Activated CD4-positive, alpha-beta T cell treated with anti-CD3 and anti-CD28 coated beads, Interleukin-2, amount 10 ng/mL, durations not matched to agents 24 days and 14 days (primary cell): ENCODE measurements at regions of chr16 and their contacts with region 1.

Region 1: GRCh38 chr16:50806099-50807062 is 64.5 kb downstream of the CYLD start:
- DNase-seq: peak; percentile 95
- H3K4me3 Mint-ChIP-seq: peak overlapping the region; percentile 75
- H3K27ac Mint-ChIP-seq: peak overlapping the region; percentile 69
- H3K4me1 Mint-ChIP-seq: peaks cover 17% of the 10 kb centered on the region
- H3K27me3 Mint-ChIP-seq: peaks cover 5% of the 10 kb centered on the region

Region 2: GRCh38 chr16:50210266-50211038 is 595.9 kb before region 1 on chr16:
- intact Hi-C with region 1: loop called (anchors 1 kb)
- DNase-seq: peak; percentile 90
- H3K4me3 Mint-ChIP-seq: no peak overlapping the region
- H3K27ac Mint-ChIP-seq: peak overlapping the region; percentile 51
- H3K4me1 Mint-ChIP-seq: peaks cover 23% of the 10 kb centered on the region
- H3K27me3 Mint-ChIP-seq: no peaks in the 10 kb centered on the region

Region 3: GRCh38 chr16:50326949-50327402 is 479.4 kb before region 1 on chr16:
- intact Hi-C with region 1: loop called (anchors 1 kb)
- DNase-seq: peak; percentile 92
- H3K4me3 Mint-ChIP-seq: peak overlapping the region; percentile 13
- H3K27ac Mint-ChIP-seq: peak overlapping the region; percentile 61
- H3K4me1 Mint-ChIP-seq: peaks cover 40% of the 10 kb centered on the region
- H3K27me3 Mint-ChIP-seq: no peaks in the 10 kb centered on the region

Region 4: DNA sequence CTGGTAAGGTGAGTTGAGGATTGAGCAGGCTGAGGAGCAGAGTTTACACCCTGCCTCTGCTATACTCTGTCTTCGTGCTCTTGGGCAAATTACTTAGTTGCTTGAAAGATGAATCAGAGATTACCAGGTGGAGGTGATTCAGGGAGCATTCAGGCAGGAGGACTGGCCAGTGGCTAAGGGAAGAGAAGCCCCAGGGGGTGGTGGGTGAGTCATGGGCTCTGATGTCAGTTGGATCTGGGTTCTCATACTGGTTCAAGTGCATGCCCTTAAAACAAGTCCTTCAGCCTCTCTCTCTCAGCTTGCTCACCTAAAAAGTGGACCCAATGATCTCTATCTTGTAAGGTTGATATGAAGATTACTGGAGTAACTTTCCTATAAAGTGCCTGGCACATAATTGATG is 409.2 kb before region 1 on chr16:
- intact Hi-C with region 1: no loop called
- DNase-seq: peak; percentile 42
- H3K4me3 Mint-ChIP-seq: no peak overlapping the region
- H3K27ac Mint-ChIP-seq: no peak overlapping the region
- H3K4me1 Mint-ChIP-seq: peaks cover 4% of the 10 kb centered on the region
- H3K27me3 Mint-ChIP-seq: no peaks in the 10 kb centered on the region

Region 5: DNA sequence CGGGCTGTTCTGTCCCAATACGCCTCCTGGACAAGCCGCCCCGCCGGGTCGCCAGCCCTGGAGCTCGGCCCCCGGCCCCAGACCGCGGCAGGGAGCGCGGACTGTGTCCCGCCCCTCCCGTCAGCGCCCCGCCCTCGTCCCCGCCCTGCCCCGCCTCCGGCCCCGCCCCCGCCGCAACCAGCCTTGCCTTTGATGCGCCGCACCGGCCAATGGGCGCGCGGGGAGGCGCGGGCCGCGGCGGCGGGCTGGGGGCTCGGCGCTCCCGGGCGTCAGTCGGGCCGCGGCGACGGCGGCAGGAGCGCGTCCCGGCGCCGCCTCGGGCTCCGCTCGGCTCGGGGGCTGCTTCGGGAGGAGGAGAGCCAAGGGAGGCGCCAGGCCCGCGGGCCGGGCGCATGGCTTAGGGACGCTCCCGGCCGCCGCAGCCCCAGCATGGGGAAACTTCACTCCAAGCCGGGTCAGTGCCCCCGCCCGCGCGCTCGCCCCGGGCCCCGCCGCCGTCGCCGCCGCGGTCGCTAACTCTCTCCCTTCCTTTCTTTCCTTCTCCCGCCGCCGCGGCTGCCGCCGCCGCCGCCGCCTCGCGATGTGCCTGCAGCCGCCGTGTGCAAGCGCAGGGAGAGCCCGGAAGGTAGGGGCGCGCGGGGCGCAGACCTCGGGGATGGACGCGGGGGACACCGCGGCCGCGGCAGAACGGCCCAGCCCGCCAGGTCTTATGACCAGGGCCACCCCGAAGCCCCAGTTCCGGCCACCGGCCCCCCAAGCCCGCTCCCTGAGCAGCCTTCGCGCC is 258.1 kb before region 1 on chr16 and contains the start of gene NKD1:
- intact Hi-C with region 1: loop called (anchors 10 kb)
- DNase-seq: peak; percentile 92
- H3K4me3 Mint-ChIP-seq: peak within 1 kb of the TSS; percentile 89
- H3K27ac Mint-ChIP-seq: peak within 1 kb of the TSS; percentile 64
- H3K4me1 Mint-ChIP-seq: peaks cover 8% of the 10 kb centered on the region
- H3K27me3 Mint-ChIP-seq: peaks cover 57% of the 10 kb centered on the region
- total RNA-seq, gene NKD1: 0.77 and 1.7 TPM in 2 replicates

Region 6: GRCh38 chr16:50671644-50672260 is 134.6 kb before region 1 on chr16:
- intact Hi-C with region 1: loop called (anchors 1 kb)
- DNase-seq: peak; percentile 90
- H3K4me3 Mint-ChIP-seq: no peak overlapping the region
- H3K27ac Mint-ChIP-seq: peak overlapping the region; percentile 12
- H3K4me1 Mint-ChIP-seq: peaks cover 34% of the 10 kb centered on the region
- H3K27me3 Mint-ChIP-seq: no peaks in the 10 kb centered on the region

Region 7: GRCh38 chr16:50696575-50697420 is 109.6 kb before region 1 on chr16:
- intact Hi-C with region 1: no loop called
- DNase-seq: peak; percentile 72
- H3K4me3 Mint-ChIP-seq: peak overlapping the region; percentile 81
- H3K27ac Mint-ChIP-seq: peak overlapping the region; percentile 29
- H3K4me1 Mint-ChIP-seq: peaks cover 70% of the 10 kb centered on the region
- H3K27me3 Mint-ChIP-seq: peaks cover 5% of the 10 kb centered on the region

Region 8: DNA sequence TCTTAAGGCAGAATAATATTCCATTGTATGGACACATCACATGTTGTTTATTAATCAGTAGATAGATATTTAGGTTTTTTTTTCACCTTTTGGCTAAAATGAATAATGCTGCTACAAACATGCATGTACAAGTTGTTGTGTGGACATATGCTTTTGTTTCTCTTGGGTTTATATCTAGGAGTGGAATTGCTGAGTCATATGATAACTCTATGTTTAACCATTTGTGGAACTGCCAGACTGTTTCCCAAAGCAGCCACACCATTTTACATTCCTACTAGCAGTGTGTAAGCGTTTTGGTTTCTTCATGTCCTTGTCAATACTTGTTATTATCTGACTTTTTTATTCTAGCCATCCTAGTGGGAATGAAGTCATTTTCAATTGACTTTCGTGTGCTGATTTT is 43.2 kb before region 1 on chr16:
- intact Hi-C with region 1: no loop called
- DNase-seq: no peak
- H3K4me3 Mint-ChIP-seq: no peak overlapping the region
- H3K27ac Mint-ChIP-seq: peak overlapping the region; percentile 46
- H3K4me1 Mint-ChIP-seq: peaks cover 61% of the 10 kb centered on the region
- H3K27me3 Mint-ChIP-seq: no peaks in the 10 kb centered on the region

Region 9: DNA sequence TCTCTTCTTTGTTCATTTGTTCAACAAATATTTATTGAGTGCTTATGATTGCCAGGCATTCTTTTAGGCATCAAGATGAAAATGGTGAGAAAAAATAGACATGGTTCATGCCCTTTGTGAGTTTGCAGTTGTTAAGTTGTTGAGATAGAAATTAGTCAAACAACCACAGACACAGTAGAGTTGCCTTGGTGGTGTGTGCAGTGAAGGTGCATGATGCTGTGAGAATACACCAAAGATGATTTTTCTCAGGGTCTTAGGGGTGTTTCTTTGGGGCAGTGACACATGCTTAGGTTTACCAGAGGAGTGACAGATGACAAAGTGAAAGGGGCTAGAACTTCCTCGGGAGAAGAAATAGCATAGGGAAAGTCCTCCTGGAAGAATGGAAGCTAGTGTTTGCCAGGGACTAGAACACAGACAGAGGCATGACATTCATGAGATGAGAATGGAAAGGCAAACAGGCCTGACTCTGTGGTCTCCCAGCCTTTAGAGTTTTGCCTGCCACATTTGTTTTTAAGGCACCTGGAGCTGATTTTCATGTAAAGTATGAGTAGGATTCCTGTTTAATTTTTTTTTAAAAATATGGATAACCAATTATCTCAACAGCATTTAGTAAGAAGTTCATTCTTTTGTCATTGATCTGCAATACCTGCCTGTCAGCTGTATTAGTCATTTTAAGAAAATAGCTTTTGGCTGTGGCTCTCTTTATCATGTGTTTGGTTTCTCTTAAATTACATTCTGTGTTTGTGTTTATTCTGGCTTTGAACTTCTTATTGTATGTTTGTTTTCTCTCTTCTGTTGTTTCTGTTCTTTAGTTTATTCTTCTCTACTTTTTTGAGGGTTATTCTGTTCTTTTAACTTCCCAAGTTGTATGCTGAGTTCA is 27.9 kb before region 1 on chr16:
- intact Hi-C with region 1: loop called (anchors 2 kb)
- DNase-seq: no peak
- H3K4me3 Mint-ChIP-seq: peak overlapping the region; percentile 25
- H3K27ac Mint-ChIP-seq: peak overlapping the region; percentile 75
- H3K4me1 Mint-ChIP-seq: peaks cover 43% of the 10 kb centered on the region
- H3K27me3 Mint-ChIP-seq: no peaks in the 10 kb centered on the region